ENCODE measurements at regions of chr1 and their contacts with region 1.

Region 1: GRCh38 chr1:182084487-182085316 is 23.2 kb upstream of the ZNF648 start:
- DNase-seq: peak; percentile 88
- H3K4me3 Mint-ChIP-seq: no peak overlapping the region
- H3K27ac Mint-ChIP-seq: peak overlapping the region; percentile 61
- H3K4me1 Mint-ChIP-seq: peaks cover 55% of the 10 kb centered on the region
- H3K27me3 Mint-ChIP-seq: no peaks in the 10 kb centered on the region

Region 2: DNA sequence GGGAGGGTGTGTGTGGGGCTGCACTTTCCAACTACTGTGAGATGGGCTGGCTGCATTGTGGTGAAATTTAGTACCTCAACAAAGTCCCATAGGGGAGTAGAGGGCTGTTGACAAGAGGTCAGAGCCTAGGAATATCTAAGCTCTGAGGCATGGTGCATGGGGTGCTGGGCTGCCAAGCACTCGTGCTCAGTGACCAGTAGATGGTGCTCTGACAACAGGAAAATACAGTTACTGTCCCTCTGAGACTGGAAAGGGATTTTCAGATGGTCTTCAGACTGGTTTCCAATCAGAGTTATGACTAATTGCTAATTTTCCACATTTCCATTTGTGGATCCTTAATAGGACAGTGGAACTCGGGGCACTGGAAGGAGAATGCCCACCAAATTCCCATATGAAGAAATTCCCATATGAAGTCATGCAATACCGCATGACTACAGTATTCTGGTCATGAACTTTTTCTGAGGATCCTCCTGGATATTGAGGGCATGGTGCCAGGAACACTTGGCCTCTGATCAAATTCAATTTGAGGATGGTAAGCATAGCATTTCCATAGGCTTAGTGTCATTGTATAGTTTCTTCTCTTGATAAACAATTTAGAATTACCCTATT is 605.5 kb before region 1 on chr1:
- CTCF ChIA-PET with region 1: interaction called, 52 read pairs
- POLR2A ChIA-PET with region 1: no interaction called
- DNase-seq: peak; percentile 29
- H3K4me3 Mint-ChIP-seq: no peak overlapping the region
- H3K27ac Mint-ChIP-seq: no peak overlapping the region
- H3K4me1 Mint-ChIP-seq: peaks cover 7% of the 10 kb centered on the region
- H3K27me3 Mint-ChIP-seq: peaks cover 42% of the 10 kb centered on the region

Region 3: DNA sequence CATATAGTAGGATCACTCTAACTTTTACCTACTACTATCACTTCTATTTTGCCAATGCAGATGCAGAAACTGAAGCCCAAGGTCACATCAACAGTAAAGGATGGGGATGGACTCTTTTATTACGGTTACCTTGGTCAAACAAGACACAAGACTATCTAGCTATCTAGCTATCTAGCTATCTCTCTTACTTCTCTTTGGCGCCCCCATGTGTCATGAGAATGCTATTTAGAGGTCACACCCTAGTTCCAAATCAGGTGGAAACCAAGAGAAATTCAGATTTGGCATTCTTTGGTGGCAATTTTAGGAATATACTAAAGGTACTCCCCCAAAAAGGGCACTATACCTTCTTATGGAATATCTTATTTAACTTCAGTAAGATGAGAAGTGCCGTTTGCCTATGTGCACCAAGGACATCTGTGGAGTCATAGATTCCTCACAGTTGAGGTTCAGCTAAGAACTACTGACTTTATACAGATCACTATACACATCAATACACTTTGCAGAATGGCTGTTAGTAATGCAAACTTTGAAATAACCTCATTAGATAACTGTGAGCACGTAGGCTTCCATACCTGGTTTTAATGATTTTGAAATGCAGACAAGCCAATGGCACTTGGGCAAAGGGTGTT is 29.9 kb before region 1 on chr1:
- CTCF ChIA-PET with region 1: interaction called, 24 read pairs
- POLR2A ChIA-PET with region 1: no interaction called
- DNase-seq: peak; percentile 64
- H3K4me3 Mint-ChIP-seq: no peak overlapping the region
- H3K27ac Mint-ChIP-seq: no peak overlapping the region
- H3K4me1 Mint-ChIP-seq: peaks cover 6% of the 10 kb centered on the region
- H3K27me3 Mint-ChIP-seq: peaks cover 33% of the 10 kb centered on the region

Region 4: GRCh38 chr1:182110635-182111034 is 25.9 kb after region 1 on chr1:
- CTCF ChIA-PET with region 1: interaction called, 31 read pairs
- POLR2A ChIA-PET with region 1: no interaction called
- DNase-seq: no peak
- H3K4me3 Mint-ChIP-seq: no peak overlapping the region
- H3K27ac Mint-ChIP-seq: no peak overlapping the region
- H3K4me1 Mint-ChIP-seq: no peaks in the 10 kb centered on the region
- H3K27me3 Mint-ChIP-seq: peaks cover 35% of the 10 kb centered on the region

Region 5: DNA sequence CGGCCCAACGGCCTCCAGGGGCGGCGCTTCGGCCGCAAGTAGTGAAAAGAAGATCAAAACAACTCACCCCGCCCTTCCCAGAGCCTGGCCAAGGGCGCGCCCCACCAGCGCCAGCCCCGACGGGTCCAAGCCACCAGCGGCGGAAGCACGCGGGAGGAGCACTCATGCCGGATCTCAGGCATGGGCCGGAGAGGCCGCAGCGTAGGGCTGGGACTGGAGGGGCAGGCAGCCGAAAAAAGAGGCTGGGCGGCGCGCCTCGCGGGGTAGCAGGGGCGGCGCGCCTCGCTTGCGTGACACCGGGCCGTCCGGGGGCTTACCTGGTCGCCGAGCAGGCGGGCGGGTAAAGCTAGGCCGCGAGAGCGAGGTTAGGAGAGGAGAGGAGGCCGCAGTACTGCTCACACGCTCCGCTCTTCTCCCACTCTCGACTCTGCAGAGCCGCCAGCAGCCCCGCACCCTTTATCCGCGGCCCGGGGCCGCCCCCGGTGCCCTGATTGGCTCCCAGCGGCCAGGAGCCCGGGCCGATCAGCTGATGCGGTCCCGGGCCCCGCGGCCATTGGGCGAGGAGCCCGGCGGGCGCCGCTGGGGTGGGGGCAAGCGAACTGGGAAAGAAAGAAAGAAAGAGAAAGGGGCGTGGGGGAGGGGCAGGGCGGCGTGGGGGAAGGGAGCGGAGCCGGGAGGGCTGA is 306.8 kb after region 1 on chr1 and contains the start of gene GLUL:
- CTCF ChIA-PET with region 1: interaction called, 261 read pairs
- POLR2A ChIA-PET with region 1: interaction called, 11 read pairs
- DNase-seq: peak; percentile 81
- H3K4me3 Mint-ChIP-seq: peak within 1 kb of the TSS; percentile 96
- H3K27ac Mint-ChIP-seq: peak within 1 kb of the TSS; percentile 83
- H3K4me1 Mint-ChIP-seq: peaks cover 36% of the 10 kb centered on the region
- H3K27me3 Mint-ChIP-seq: peaks cover 30% of the 10 kb centered on the region
- total RNA-seq, gene GLUL: 227 to 228 TPM